HepG2 (cell line): ENCODE measurements at regions of chr5 and their contacts with region 1.

Region 1: GRCh38 chr5:67773411-67774266 is 441.9 kb upstream of the PIK3R1 start:
- DNase-seq: peak; percentile 92
- ATAC-seq: peak; percentile 51
- H3K4me3 ChIP-seq: peak overlapping the region in 1 of 3 experiments; percentile 24; a peak in 1 of 6 replicates
- H3K27ac ChIP-seq: peak overlapping the region; percentile 92
- H3K4me1 ChIP-seq: peaks cover 70% of the 10 kb centered on the region
- H3K27me3 ChIP-seq: no peaks in the 10 kb centered on the region
- CTCF ChIP-seq: no peak
- EP300 ChIP-seq: peak in 1 of 2 experiments; percentile 77; a peak in 3 of 4 replicates
- POLR2A ChIP-seq: no peak
- RAD21 ChIP-seq: no peak

Region 2: GRCh38 chr5:66498791-66499207 is 1274.8 kb before region 1 on chr5:
- CTCF ChIA-PET with region 1: no interaction called
- POLR2A ChIA-PET with region 1: no interaction called
- in situ Hi-C with region 1: no loop called
- intact Hi-C with region 1: no loop called
- DNase-seq: peak; percentile 6
- ATAC-seq: peak; percentile 54; the same call in 2 of the 3 replicates
- H3K4me3 ChIP-seq: no peak overlapping the region
- H3K27ac ChIP-seq: no peak overlapping the region
- H3K4me1 ChIP-seq: no peaks in the 10 kb centered on the region
- H3K27me3 ChIP-seq: no peaks in the 10 kb centered on the region; a peak in 2 of 5 replicates
- CTCF ChIP-seq: 0 out of 2 replicates have a peak, but pooled peaks have one; percentile 10
- EP300 ChIP-seq: no peak
- POLR2A ChIP-seq: no peak
- RAD21 ChIP-seq: no peak

Region 3: GRCh38 chr5:67493676-67494075 is 280.0 kb before region 1 on chr5:
- CTCF ChIA-PET with region 1: no interaction called
- POLR2A ChIA-PET with region 1: no interaction called
- in situ Hi-C with region 1: no loop called
- intact Hi-C with region 1: loop called (anchors 1 kb)
- DNase-seq: peak; percentile 55
- ATAC-seq: peak; percentile 98
- H3K4me3 ChIP-seq: no peak overlapping the region
- H3K27ac ChIP-seq: no peak overlapping the region
- H3K4me1 ChIP-seq: no peaks in the 10 kb centered on the region
- H3K27me3 ChIP-seq: no peaks in the 10 kb centered on the region
- CTCF ChIP-seq: peak; percentile 87
- EP300 ChIP-seq: no peak
- POLR2A ChIP-seq: no peak
- RAD21 ChIP-seq: peak; percentile 74; the same call in 1 of the 2 replicates

Region 4: DNA sequence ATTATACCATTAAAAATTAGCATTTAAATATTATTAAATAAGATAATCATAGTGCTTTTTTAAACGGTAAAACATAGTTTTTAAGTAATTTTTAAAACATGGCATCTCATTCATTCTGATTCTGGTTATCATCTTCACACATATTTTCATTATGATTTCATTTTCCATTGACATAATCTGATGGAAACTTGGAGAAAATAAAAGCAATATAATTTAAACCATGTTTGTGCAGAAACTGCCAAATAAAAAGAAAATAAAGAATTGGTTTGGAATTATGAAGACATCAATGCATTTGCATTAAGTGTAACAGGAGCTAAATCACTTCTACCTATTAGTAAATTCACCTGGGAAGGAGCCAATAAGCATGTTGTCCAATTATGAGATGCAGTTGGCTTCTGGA is 86.9 kb before region 1 on chr5:
- CTCF ChIA-PET with region 1: no interaction called
- POLR2A ChIA-PET with region 1: no interaction called
- in situ Hi-C with region 1: no loop called
- intact Hi-C with region 1: no loop called
- DNase-seq: no peak
- ATAC-seq: no peak
- H3K4me3 ChIP-seq: no peak overlapping the region
- H3K27ac ChIP-seq: no peak overlapping the region
- H3K4me1 ChIP-seq: no peaks in the 10 kb centered on the region
- H3K27me3 ChIP-seq: no peaks in the 10 kb centered on the region
- CTCF ChIP-seq: no peak
- EP300 ChIP-seq: no peak
- POLR2A ChIP-seq: no peak
- RAD21 ChIP-seq: no peak

Region 5: DNA sequence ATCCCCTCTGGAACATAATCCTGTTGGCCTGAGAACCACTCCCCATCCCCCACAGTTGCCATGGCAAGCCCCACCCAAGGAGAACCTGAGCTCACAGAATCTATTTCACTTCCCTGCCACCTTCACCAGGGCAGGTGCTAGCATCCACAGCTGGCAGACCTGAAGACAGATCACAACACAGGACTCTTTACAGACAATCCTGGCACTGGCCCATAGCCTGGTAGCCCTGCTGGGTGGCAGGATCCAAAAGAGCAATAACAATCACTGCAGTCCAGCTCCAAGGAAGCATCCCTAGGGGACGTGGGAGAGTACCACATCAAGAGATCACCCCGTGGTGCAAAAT is 21.3 kb before region 1 on chr5:
- CTCF ChIA-PET with region 1: no interaction called
- POLR2A ChIA-PET with region 1: interaction called, 16 read pairs
- in situ Hi-C with region 1: no loop called
- intact Hi-C with region 1: no loop called
- DNase-seq: no peak
- ATAC-seq: no peak
- H3K4me3 ChIP-seq: no peak overlapping the region
- H3K27ac ChIP-seq: no peak overlapping the region
- H3K4me1 ChIP-seq: peaks cover 41% of the 10 kb centered on the region
- H3K27me3 ChIP-seq: no peaks in the 10 kb centered on the region
- CTCF ChIP-seq: no peak
- EP300 ChIP-seq: no peak
- POLR2A ChIP-seq: no peak
- RAD21 ChIP-seq: no peak

Region 6: DNA sequence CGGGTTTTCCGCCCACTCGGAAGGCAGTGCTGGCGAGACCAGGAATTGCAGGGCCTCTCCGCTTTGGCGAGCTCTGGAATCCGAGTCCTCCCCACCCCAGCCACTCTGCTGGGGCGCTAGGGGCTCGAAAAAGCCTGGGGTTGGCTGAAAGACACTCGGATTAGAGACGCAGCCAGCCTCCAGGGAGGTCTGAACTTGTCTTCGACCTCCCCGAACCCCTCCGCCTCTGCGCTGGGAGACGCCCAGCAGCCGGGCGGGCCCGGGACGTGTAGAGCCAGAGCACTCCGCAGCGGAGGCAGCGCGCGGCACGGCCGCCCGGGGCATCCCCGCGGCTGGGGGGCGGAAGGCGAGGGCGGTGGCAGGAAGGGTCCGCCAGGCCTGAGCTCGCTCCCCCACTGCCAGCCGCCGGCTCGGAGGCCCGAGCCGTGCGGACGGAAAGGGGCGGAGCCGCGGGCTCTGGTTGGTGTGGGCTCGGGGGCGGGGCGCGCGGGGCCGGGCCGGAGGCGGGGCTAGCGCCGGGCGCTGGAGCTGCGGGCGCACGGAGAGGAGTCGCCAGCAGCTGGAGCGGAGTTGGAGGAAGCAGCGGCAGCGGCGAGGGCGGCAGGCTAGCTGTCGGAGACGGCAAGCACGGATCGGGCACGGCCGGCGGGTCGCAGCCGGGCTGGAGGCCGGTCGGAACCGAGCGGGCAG is 441.7 kb after region 1 on chr5 and contains the start of gene PIK3R1:
- CTCF ChIA-PET with region 1: no interaction called
- POLR2A ChIA-PET with region 1: interaction called, 21 read pairs
- in situ Hi-C with region 1: no loop called
- intact Hi-C with region 1: loop called (anchors 2 kb)
- DNase-seq: peak; percentile 84
- ATAC-seq: peak; percentile 90
- H3K4me3 ChIP-seq: peak within 1 kb of the TSS; percentile 93 to 99 (median 95)
- H3K27ac ChIP-seq: peak within 1 kb of the TSS; percentile 93
- H3K4me1 ChIP-seq: peaks cover 38% of the 10 kb centered on the region
- H3K27me3 ChIP-seq: peaks cover 0 to 2% of the 10 kb centered on the region in 2 experiments; a peak in 1 of 5 replicates
- CTCF ChIP-seq: peak; percentile 32; the same call in 1 of the 2 replicates
- EP300 ChIP-seq: no peak
- POLR2A ChIP-seq: peak; percentile 69 to 97
- RAD21 ChIP-seq: peak; percentile 45
- total RNA-seq, gene PIK3R1: 21.3 and 26.0 TPM in 2 replicates